CD8-positive, alpha-beta T cell (primary cell): ENCODE measurements at regions of chr1 and their contacts with region 1.

Region 1: GRCh38 chr1:204806943-204807687 is 63.5 kb upstream of the NFASC start:
- DNase-seq: peak; percentile 69 to 90 (median 83)
- ATAC-seq: peak; percentile 96
- H3K4me3 ChIP-seq: peak overlapping the region; percentile 53 to 59
- H3K4me3 Mint-ChIP-seq: peak overlapping the region; percentile 88
- H3K27ac ChIP-seq: no peak overlapping the region
- H3K27ac Mint-ChIP-seq: no peak overlapping the region
- H3K4me1 ChIP-seq: peaks cover 12% of the 10 kb centered on the region
- H3K4me1 Mint-ChIP-seq: peaks cover 20% of the 10 kb centered on the region
- H3K27me3 ChIP-seq: no peaks in the 10 kb centered on the region
- H3K27me3 Mint-ChIP-seq: no peaks in the 10 kb centered on the region
- CTCF ChIP-seq: peak; percentile 100

Region 2: DNA sequence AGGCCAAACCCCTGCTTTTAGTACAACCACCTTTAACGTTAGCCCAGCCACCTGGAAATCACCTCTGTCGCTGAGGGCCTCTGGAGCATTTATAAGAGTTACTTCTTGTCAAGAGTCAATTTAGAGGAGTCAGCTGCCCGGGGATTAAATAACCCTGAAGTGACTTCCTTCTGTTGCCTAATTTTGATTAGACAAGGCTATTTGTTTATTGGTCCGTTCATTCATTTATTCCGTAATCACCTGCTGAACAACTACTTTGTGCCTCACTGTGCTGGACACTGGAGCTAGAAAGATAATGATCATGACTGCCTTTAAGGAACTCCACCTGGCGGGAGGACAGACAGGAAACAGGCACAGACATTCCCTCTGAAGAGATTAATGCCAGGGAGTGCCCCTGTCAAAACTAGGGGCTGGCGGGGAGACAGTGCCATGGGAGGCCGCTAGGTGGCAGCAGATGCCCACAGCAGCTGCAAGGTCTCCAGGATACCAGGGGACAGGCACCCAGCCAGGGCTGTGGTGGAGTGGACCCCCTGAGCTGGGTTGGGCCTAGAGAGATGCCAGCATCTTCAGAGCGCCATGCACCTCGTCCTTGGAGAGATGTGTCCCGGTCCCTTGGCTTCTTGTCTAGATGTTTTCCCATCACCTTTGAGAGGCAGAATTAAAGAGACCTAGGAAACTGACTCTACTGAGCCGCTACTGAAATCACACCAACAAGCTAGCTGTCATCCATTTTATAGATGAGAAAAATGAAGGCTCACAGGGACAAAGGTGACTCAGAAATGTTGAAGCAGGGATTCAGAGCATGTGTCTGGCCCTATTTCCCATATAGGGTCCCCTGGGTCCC is 644.7 kb before region 1 on chr1:
- CTCF ChIA-PET with region 1: interaction called, 4 read pairs
- POLR2A ChIA-PET with region 1: no interaction called
- intact Hi-C with region 1: loop called in 1 of 2 experiments (anchors 5 kb)
- DNase-seq: peak; percentile 61 to 87 (median 79)
- ATAC-seq: peak; percentile 99
- H3K4me3 ChIP-seq: no peak overlapping the region
- H3K4me3 Mint-ChIP-seq: no peak overlapping the region
- H3K27ac ChIP-seq: no peak overlapping the region
- H3K27ac Mint-ChIP-seq: no peak overlapping the region
- H3K4me1 ChIP-seq: no peaks in the 10 kb centered on the region
- H3K4me1 Mint-ChIP-seq: no peaks in the 10 kb centered on the region
- H3K27me3 ChIP-seq: no peaks in the 10 kb centered on the region
- H3K27me3 Mint-ChIP-seq: peaks cover 12% of the 10 kb centered on the region
- CTCF ChIP-seq: peak; percentile 98

Region 3: GRCh38 chr1:204363335-204364124 is 443.6 kb before region 1 on chr1:
- CTCF ChIA-PET with region 1: no interaction called
- POLR2A ChIA-PET with region 1: no interaction called
- intact Hi-C with region 1: no loop called
- DNase-seq: peak; percentile 52 to 90 (median 71)
- ATAC-seq: peak; percentile 99
- H3K4me3 ChIP-seq: peak overlapping the region; percentile 45 to 52
- H3K4me3 Mint-ChIP-seq: peak overlapping the region; percentile 77
- H3K27ac ChIP-seq: peak overlapping the region in 1 of 2 experiments; percentile 24
- H3K27ac Mint-ChIP-seq: no peak overlapping the region
- H3K4me1 ChIP-seq: peaks cover 10% of the 10 kb centered on the region
- H3K4me1 Mint-ChIP-seq: peaks cover 5% of the 10 kb centered on the region
- H3K27me3 ChIP-seq: no peaks in the 10 kb centered on the region
- H3K27me3 Mint-ChIP-seq: peaks cover 4% of the 10 kb centered on the region
- CTCF ChIP-seq: peak; percentile 74

Region 4: GRCh38 chr1:204494281-204495077 is 312.6 kb before region 1 on chr1 and contains the start of gene PIK3C2B:
- CTCF ChIA-PET with region 1: interaction called, 4 read pairs
- POLR2A ChIA-PET with region 1: no interaction called
- intact Hi-C with region 1: loop called in 1 of 2 experiments (anchors 5 kb)
- DNase-seq: peak; percentile 29 to 86 (median 69)
- ATAC-seq: peak; percentile 69
- H3K4me3 ChIP-seq: peak within 1 kb of the TSS; percentile 64 to 86
- H3K4me3 Mint-ChIP-seq: peak within 1 kb of the TSS; percentile 94
- H3K27ac ChIP-seq: peak within 1 kb of the TSS; percentile 63 to 72
- H3K27ac Mint-ChIP-seq: peak within 1 kb of the TSS; percentile 96
- H3K4me1 ChIP-seq: peaks cover 29% of the 10 kb centered on the region
- H3K4me1 Mint-ChIP-seq: peaks cover 52% of the 10 kb centered on the region
- H3K27me3 ChIP-seq: no peaks in the 10 kb centered on the region
- H3K27me3 Mint-ChIP-seq: no peaks in the 10 kb centered on the region
- CTCF ChIP-seq: no peak
- total RNA-seq, gene PIK3C2B: 32.2 to 32.6 TPM

Region 5: DNA sequence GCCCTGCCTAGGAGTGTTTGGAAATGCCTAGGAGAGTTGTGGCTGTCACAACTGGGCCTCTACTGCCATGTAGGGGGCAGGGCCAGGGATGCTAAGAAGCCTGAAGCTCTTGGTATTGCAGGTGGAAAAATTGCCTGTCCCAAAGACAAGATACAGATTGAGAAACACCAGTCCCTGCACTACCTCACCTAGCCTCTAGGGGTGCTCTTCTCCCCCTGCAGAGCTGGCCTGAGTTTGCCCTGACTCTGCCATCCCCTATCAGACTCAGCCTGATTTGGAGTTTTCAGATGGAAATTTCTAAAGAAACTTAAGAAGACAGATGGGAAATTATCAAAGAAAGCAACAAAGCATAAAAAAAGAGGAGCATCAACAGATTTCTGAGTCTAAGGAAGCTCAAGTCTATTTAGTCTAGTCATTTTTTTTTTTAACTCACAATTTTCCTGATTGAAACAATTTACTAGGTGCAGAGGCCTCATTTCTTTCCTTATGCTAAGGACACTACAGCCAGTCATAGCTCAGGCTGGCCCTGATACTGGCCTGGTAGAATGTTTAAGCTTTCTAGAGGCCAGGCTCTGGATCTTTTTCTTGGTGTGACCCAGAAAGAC is 60.2 kb before region 1 on chr1:
- CTCF ChIA-PET with region 1: interaction called, 17 read pairs
- POLR2A ChIA-PET with region 1: no interaction called
- intact Hi-C with region 1: no loop called
- DNase-seq: peak; percentile 10 to 72 (median 52)
- ATAC-seq: peak; percentile 86
- H3K4me3 ChIP-seq: no peak overlapping the region
- H3K4me3 Mint-ChIP-seq: no peak overlapping the region
- H3K27ac ChIP-seq: no peak overlapping the region
- H3K27ac Mint-ChIP-seq: no peak overlapping the region
- H3K4me1 ChIP-seq: no peaks in the 10 kb centered on the region
- H3K4me1 Mint-ChIP-seq: no peaks in the 10 kb centered on the region
- H3K27me3 ChIP-seq: no peaks in the 10 kb centered on the region
- H3K27me3 Mint-ChIP-seq: peaks cover 8% of the 10 kb centered on the region
- CTCF ChIP-seq: peak; percentile 98

Region 6: DNA sequence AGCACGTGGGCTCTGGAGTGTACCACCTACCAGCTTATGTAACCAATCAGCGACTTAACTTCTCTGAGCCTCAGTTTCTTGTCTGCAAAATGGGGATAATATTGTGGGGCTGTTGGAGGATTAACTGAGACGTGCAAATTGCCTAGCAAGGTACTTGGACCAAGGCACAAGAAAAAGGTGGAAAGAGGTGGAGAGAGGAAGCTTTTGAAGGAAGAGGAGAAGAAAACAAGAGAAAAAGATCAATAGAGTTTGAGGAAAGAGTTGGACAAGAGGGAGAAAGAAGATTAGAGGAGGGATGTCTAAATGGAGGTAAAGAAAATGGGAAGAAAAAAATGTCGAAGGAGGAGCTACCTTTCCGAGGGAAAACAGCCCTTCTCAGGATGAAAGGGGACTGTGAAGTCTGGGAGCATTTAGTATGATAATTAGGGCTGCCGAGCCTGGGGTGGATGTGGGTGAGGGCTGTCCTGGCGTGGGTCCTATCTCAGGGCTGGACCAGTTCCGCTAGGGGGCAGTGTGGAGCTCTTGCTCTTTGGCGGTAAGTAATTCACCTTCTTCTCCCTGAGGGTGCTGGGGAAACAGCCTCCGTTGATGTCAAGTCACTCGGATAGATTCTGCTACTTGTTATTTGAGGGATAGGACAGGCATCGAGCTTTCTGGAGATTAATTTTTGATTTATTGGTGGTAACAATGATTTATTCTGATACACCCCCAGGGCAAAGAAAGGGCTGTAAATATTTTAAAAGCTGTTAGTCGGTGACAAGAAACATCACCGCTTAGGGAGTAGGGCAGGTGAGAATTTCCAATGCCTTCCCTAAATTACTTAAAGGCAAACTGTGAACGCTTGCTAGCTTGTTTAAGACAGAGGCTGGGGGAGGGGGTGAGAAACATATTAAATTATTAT is 15.4 kb before region 1 on chr1:
- CTCF ChIA-PET with region 1: interaction called, 135 read pairs
- POLR2A ChIA-PET with region 1: no interaction called
- intact Hi-C with region 1: loop called (anchors 1 kb)
- DNase-seq: peak; percentile 63 to 88 (median 80)
- ATAC-seq: peak; percentile 88
- H3K4me3 ChIP-seq: no peak overlapping the region
- H3K4me3 Mint-ChIP-seq: no peak overlapping the region
- H3K27ac ChIP-seq: no peak overlapping the region
- H3K27ac Mint-ChIP-seq: no peak overlapping the region
- H3K4me1 ChIP-seq: no peaks in the 10 kb centered on the region
- H3K4me1 Mint-ChIP-seq: no peaks in the 10 kb centered on the region
- H3K27me3 ChIP-seq: peaks cover 0 to 2% of the 10 kb centered on the region in 2 experiments
- H3K27me3 Mint-ChIP-seq: peaks cover 26% of the 10 kb centered on the region
- CTCF ChIP-seq: peak; percentile 83